GM13977 (cell line): ENCODE measurements at regions of chr18 and their contacts with region 1.

Region 1: GRCh38 chr18:59823596-59824195 is 76.1 kb upstream of the PMAIP1 start:
- DNase-seq: peak; percentile 53
- CTCF ChIP-seq: peak; percentile 87

Region 2: DNA sequence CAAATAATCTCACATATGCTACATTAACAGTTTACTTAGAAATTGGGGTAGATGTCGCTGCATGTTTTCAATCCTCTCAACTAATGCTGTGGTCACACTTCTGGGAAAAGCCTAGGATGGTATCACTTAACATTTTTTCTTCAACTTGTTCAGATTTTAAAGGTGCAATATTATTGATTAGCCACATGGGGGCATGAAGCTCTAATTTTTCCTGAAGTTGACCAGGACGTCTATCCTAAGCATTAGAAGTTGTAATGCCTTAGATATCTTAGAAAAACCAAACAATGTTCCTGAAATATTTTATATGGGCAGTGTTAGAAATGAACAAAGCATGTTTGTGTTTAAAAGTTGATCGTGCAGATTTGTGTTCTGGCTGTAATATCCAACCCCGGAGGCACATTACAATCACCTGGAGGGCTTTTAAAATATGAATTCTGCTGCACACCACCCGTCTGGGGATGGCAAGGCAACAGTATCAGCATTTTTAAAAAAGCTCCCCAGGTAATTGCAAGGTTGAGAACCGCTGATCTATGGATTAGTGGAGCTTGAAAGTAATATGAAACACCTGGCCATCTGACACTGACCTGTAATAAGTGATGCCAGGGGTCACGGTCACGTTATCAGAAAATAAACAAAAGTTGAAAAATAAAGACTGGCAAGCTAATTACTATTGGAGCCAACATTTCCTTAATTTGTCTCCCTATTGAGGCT is 364.2 kb before region 1 on chr18:
- in situ Hi-C with region 1: loop called (anchors 25 kb)
- DNase-seq: peak; percentile 49
- CTCF ChIP-seq: peak; percentile 69

Region 3: DNA sequence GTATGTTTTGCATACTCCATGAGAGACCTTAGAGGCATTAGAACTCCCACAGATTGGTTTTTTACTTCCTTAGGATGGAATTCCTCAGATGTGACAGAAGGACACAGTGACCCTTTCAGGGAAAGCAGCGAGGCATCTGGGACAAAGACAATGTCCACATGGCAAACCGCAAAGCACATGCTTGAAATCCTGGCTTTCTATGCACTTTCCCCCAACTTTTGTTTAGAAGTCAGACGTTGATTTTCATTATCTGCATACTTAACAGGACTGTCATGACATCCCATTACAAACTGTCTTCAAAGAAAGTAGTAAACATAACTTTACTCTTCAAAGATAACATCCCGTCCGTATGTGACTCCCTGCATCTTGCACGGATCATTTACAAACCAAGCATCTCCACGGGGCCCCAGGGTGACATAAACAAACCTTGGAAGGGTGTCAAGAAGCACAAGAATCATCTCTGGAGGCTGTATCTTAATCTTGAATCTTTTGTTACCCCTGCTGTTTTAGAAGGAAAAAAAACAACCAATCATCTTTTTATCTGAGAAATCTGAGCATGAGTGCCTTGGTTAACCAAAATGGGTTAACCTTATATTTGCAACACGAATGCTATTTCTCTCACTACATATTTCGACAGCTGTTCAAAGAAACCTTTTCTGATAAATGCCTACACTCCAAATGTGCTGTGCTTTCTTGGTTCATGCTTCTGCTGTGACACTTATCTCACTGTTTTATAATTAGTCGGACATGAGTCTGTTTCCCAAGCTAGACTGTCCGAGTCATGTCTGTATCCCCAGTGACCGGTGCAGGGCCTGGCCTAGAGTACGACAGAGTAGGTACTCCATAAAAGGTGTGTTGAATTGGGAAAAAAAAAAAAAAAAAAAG is 217.3 kb before region 1 on chr18:
- in situ Hi-C with region 1: no loop called
- DNase-seq: no peak
- CTCF ChIP-seq: no peak

Region 4: GRCh38 chr18:59650266-59650820 is 173.4 kb before region 1 on chr18:
- in situ Hi-C with region 1: no loop called
- DNase-seq: no peak
- CTCF ChIP-seq: no peak

Region 5: DNA sequence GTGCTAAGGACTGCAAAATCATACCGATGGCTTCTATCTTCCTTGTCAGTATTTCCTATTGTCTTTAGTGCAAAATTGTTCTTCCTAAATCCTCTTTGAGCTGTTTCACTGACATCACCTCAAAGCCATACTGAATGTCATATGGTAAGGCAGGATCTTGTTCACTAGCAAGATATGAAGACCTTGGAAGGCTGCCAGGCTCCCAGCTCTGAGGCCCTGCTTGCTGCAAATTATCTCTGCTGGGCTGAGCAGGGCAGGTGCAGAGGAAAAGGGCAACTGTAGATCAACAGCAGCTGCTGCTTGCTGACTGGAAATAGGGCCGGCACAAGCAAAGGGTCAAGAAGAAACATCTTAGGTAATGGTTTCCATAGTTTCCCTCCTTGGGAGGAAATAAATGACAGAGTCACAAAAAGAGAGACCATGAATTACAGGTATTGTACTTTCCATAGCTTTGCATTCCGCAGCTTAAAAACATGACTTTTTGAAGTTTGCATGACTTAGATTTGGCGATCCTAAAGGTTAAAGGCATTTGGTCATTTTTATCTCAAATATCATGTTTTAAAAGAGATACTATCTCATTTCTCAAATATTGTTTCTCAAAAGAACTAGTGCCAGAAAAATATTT is 134.4 kb after region 1 on chr18:
- in situ Hi-C with region 1: no loop called
- DNase-seq: no peak
- CTCF ChIP-seq: no peak

Region 6: GRCh38 chr18:60232541-60232940 is 408.8 kb after region 1 on chr18:
- in situ Hi-C with region 1: no loop called
- DNase-seq: no peak
- CTCF ChIP-seq: no peak